ENCODE measurements at regions of chr18 and their contacts with region 1.

Region 1: GRCh38 chr18:13813271-13813849 is 10.6 kb upstream of the MC5R start:
- DNase-seq: peak; percentile 71
- ATAC-seq: peak; percentile 93
- H3K4me3 Mint-ChIP-seq: no peak overlapping the region
- H3K27ac Mint-ChIP-seq: no peak overlapping the region
- H3K4me1 Mint-ChIP-seq: no peaks in the 10 kb centered on the region
- H3K27me3 Mint-ChIP-seq: no peaks in the 10 kb centered on the region
- CTCF ChIP-seq: peak; percentile 92

Region 2: GRCh38 chr18:13760047-13760446 is 53.3 kb before region 1 on chr18:
- CTCF ChIA-PET with region 1: interaction called, 13 read pairs
- POLR2A ChIA-PET with region 1: no interaction called
- intact Hi-C with region 1: no loop called
- DNase-seq: no peak
- ATAC-seq: no peak
- H3K4me3 Mint-ChIP-seq: no peak overlapping the region
- H3K27ac Mint-ChIP-seq: no peak overlapping the region
- H3K4me1 Mint-ChIP-seq: no peaks in the 10 kb centered on the region
- H3K27me3 Mint-ChIP-seq: no peaks in the 10 kb centered on the region
- CTCF ChIP-seq: no peak

Region 3: DNA sequence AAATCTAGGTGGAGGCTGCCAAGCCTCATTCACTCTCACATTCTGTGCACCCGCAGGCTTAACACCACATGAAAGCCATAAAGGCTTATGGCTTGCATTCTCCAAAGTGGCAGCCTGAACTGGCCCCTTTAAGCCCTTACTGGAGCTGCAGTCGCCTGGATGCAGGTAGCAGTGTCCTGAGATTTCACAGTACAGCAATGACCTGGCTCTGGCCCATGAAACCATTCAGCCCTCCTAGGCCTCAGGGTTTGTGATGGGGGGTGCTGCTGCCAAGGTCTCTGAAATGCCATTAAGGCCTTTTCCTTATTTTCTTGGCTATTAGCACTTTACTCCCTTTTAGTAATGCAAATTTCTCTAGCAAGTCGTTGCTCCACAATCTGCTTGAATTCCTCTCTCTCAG is 38.3 kb before region 1 on chr18:
- CTCF ChIA-PET with region 1: no interaction called
- POLR2A ChIA-PET with region 1: no interaction called
- intact Hi-C with region 1: no loop called
- DNase-seq: no peak
- ATAC-seq: no peak
- H3K4me3 Mint-ChIP-seq: no peak overlapping the region
- H3K27ac Mint-ChIP-seq: no peak overlapping the region
- H3K4me1 Mint-ChIP-seq: no peaks in the 10 kb centered on the region
- H3K27me3 Mint-ChIP-seq: peaks cover 6% of the 10 kb centered on the region
- CTCF ChIP-seq: no peak

Region 4: DNA sequence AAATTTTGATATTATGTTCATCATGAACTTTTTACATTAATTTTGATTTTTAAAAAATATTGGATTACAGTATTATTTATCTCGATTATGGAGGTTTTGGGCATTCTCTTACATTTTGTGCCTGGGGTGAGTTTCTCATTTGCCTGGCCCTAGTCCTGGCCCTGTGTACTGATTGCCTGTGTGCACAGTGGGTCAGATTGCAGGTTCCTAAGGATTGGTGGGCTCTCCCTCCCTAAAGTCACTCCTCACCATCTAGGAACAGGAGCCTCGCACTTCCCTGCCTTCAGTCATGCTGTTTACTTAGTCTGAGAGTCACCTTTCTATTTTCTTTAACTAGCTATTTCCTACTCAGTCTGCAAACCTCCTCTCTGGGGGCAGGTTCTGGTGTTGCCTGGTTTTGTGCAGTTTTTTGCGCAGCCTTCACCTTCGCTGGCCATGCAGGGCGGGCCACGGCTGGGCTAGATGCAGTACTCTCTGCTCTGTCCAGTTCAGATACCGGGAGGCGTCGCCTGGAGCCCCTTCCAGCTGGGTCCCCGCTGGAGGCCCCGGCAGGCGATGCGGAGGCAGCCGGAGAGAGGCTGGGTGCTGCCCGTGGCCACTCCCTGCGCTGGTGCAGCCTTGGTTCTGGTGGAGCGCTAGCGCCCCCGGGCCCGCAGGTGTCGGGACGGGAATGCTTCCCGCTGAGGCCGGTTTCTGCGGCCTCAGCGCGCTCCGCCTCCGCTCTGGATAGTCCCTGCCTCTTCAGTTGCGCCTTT is 12.7 kb before region 1 on chr18:
- CTCF ChIA-PET with region 1: interaction called, 47 read pairs
- POLR2A ChIA-PET with region 1: no interaction called
- intact Hi-C with region 1: no loop called
- DNase-seq: peak; percentile 68
- ATAC-seq: peak; percentile 96
- H3K4me3 Mint-ChIP-seq: peak overlapping the region; percentile 15
- H3K27ac Mint-ChIP-seq: no peak overlapping the region
- H3K4me1 Mint-ChIP-seq: peaks cover 5% of the 10 kb centered on the region
- H3K27me3 Mint-ChIP-seq: peaks cover 41% of the 10 kb centered on the region
- CTCF ChIP-seq: peak; percentile 14

Region 5: GRCh38 chr18:13823707-13824395 is 10.5 kb after region 1 on chr18 and contains the start of gene MC5R:
- CTCF ChIA-PET with region 1: interaction called, 44 read pairs
- POLR2A ChIA-PET with region 1: no interaction called
- intact Hi-C with region 1: no loop called
- DNase-seq: peak; percentile 79
- ATAC-seq: peak; percentile 99
- H3K4me3 Mint-ChIP-seq: peak within 1 kb of the TSS; percentile 13
- H3K27ac Mint-ChIP-seq: no peak within 1 kb of the TSS
- H3K4me1 Mint-ChIP-seq: peaks cover 2% of the 10 kb centered on the region
- H3K27me3 Mint-ChIP-seq: peaks cover 25% of the 10 kb centered on the region
- CTCF ChIP-seq: peak; percentile 83
- total RNA-seq, gene MC5R: not detected

Region 6: GRCh38 chr18:13831864-13832508 is 18.6 kb after region 1 on chr18:
- CTCF ChIA-PET with region 1: interaction called, 10 read pairs
- POLR2A ChIA-PET with region 1: no interaction called
- intact Hi-C with region 1: no loop called
- DNase-seq: no peak
- ATAC-seq: no peak
- H3K4me3 Mint-ChIP-seq: no peak overlapping the region
- H3K27ac Mint-ChIP-seq: no peak overlapping the region
- H3K4me1 Mint-ChIP-seq: no peaks in the 10 kb centered on the region
- H3K27me3 Mint-ChIP-seq: peaks cover 24% of the 10 kb centered on the region
- CTCF ChIP-seq: no peak

Region 7: DNA sequence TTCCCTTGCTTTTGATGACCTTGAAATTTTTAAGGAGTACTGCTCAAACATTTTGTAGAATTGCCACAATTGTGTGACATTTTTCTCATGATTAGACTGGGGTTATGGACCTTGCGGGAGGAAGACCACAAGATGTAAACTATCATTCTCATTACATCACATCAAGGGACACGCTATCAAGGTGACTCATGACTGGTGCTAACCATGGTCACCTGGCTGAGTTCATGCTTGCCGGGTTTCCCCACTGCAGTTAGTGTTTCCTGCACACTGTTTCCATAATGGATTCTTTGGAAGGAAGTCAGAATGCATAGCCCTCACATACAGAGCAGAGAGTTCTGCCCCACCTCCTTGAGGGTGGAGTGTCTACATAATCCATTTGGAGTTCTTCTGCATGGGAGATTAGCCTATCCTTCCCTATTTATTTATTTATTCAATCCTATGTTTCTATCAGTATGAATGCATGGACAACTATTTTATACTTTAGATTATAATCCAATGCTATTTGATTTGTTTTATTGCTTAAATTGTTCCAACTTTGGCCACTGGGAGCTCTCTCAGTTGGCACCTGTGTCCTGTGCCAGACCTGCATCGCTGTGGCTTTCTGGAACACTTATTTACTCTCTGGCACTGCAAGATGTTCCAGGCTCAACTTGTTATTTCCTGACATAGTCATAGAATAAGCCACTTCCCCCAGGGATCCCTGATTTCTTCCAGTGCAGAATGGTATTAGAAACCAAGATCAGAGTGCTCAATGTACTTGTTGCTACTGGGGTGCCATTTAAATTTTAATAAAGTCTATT is 96.0 kb after region 1 on chr18:
- CTCF ChIA-PET with region 1: no interaction called
- POLR2A ChIA-PET with region 1: no interaction called
- intact Hi-C with region 1: no loop called
- DNase-seq: no peak
- ATAC-seq: peak; percentile 30
- H3K4me3 Mint-ChIP-seq: no peak overlapping the region
- H3K27ac Mint-ChIP-seq: no peak overlapping the region
- H3K4me1 Mint-ChIP-seq: no peaks in the 10 kb centered on the region
- H3K27me3 Mint-ChIP-seq: no peaks in the 10 kb centered on the region
- CTCF ChIP-seq: no peak